ENCODE measurements at regions of chr15 and their contacts with region 1.

Region 1: DNA sequence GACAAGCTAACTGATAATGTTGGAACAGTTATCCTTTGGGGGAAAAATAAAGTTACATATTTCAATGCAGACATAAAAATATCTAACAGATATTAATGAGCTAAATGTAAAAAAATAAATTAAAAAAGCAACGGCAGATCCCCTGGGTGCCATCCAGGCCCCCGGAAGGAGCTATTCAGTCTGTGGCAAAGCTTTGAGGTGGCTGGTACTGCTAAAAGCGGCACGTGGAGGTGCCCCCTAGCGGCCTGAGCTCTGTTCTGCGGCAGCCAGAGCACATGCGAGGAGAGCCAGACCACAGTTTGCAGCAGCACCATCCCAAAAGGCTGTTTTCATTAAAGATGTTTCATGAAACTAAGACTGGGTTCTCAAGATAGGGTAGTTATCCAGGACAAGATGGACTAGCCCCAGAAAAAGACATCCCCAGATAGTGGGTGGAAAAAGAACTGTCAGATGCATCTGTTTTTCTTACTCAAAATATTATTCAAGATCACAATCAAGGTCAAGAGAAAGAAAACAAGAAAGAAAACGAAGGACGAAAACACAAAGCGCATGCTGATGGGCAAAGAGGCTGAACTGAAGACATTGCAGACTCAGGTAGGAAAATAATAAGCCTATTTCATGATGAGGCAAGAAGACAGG is 18.7 kb downstream of the AP3S2 start:
- DNase-seq: peak; percentile 88
- H3K4me3 Mint-ChIP-seq: no peak overlapping the region
- H3K27ac Mint-ChIP-seq: no peak overlapping the region
- H3K4me1 Mint-ChIP-seq: peaks cover 6% of the 10 kb centered on the region
- H3K27me3 Mint-ChIP-seq: no peaks in the 10 kb centered on the region

Region 2: DNA sequence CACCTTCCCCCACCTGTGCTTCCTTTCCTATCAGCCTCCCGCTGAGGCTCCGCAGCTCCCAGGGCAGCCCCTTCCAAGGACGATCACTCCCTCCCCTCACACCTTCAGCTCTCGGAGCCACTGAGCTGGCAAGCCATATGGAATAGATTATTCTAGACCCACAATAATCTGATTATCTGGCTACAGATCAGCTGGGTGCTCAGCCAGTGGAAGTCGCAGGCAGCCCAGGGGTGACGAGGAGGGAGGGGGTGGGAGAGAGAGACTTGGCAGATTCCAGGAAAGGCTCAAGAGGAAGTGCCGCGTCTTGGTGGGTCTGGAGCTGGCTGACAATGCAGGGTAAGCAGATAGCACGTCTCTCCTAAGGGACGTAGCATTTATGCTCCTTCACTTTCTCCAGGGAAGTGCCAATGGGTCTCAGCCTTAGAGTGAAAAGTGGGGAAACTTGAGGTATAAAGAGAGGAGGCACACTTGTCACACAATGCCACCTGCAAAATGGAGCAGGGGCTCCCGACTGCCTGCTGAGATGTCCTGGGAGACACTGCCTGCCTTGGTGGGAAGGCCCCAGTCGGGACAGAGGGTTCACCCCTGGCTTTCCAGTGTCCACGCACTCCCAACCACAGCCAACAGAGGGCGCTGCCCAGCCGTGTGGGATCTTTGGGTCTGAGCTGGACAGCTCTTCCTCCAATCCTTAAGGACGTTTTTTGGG is 114.6 kb before region 1 on chr15:
- CTCF ChIA-PET with region 1: interaction called, 120 read pairs
- DNase-seq: peak; percentile 79
- H3K4me3 Mint-ChIP-seq: no peak overlapping the region
- H3K27ac Mint-ChIP-seq: no peak overlapping the region
- H3K4me1 Mint-ChIP-seq: no peaks in the 10 kb centered on the region
- H3K27me3 Mint-ChIP-seq: peaks cover 42% of the 10 kb centered on the region

Region 3: GRCh38 chr15:89851673-89852341 is 23.2 kb before region 1 on chr15:
- CTCF ChIA-PET with region 1: interaction called, 12 read pairs
- DNase-seq: no peak
- H3K4me3 Mint-ChIP-seq: no peak overlapping the region
- H3K27ac Mint-ChIP-seq: no peak overlapping the region
- H3K4me1 Mint-ChIP-seq: no peaks in the 10 kb centered on the region
- H3K27me3 Mint-ChIP-seq: no peaks in the 10 kb centered on the region

Region 4: DNA sequence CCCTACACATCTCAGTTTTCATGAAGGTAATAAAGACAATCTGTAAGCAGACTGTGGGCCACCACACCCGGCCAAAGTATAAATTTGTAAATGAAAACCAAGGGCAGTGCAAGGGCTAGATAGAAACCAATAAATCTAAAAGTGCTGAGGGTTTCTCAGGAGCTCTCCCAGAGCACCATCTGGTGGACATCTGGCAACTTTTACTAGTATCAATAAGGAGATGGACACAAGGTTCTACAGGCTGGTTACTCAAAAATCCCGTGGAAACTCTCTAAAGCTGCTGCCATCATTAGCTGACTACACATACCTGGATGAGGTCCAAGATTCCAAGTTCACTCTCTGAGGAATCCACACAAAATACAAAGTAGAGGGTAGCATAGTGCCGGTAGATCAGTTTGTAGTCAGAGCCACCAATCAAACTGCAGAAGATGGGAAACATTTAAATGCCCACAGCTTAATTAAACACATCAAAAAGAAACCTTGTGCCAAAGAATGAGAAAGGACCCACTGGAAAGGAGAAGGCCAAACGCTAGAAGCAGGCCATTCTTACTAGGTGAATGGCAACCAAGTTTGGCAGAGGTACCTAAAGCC is 13.3 kb after region 1 on chr15:
- CTCF ChIA-PET with region 1: interaction called, 22 read pairs
- DNase-seq: no peak
- H3K4me3 Mint-ChIP-seq: no peak overlapping the region
- H3K27ac Mint-ChIP-seq: no peak overlapping the region
- H3K4me1 Mint-ChIP-seq: peaks cover 36% of the 10 kb centered on the region
- H3K27me3 Mint-ChIP-seq: no peaks in the 10 kb centered on the region